PC-9 (cell line): ENCODE measurements at regions of chr1 and their contacts with region 1.

Region 1: GRCh38 chr1:67832737-67833601 is at the start of gene GNG12:
- DNase-seq: peak; percentile 67 to 85
- H3K4me3 ChIP-seq: peak within 1 kb of the TSS; percentile 92
- H3K27ac ChIP-seq: peak within 1 kb of the TSS; percentile 82
- H3K4me1 ChIP-seq: peaks cover 20% of the 10 kb centered on the region
- H3K27me3 ChIP-seq: no peaks in the 10 kb centered on the region
- CTCF ChIP-seq: no peak
- total RNA-seq, gene GNG12: 69.9 and 102 TPM in 2 replicates

Region 2: DNA sequence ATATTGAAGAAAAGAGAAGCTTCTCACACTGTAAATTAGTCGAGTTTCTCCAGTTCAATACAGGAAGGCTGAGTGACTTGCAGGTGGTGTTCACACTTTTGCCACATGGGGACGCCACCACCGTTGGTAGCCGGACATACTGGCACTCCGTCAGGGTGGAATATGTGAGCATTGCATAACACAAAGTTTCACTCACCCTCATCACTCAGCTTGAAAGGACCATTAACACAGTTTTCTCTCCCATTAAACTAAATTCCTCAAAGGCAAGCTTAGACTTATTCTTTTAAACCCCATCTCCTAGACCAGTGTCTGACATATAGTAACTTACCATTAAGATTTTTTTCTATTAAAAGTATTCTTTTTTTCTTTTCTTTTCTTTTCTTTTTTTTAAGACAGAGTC is 297.5 kb before region 1 on chr1:
- CTCF ChIA-PET with region 1: no interaction called
- POLR2A ChIA-PET with region 1: no interaction called
- intact Hi-C with region 1: loop called (anchors 5 kb)
- DNase-seq: peak; percentile 69 to 88
- H3K4me3 ChIP-seq: no peak overlapping the region
- H3K27ac ChIP-seq: no peak overlapping the region
- H3K4me1 ChIP-seq: peaks cover 12% of the 10 kb centered on the region; the same call in 1 of the 2 replicates
- H3K27me3 ChIP-seq: no peaks in the 10 kb centered on the region
- CTCF ChIP-seq: peak; percentile 97

Region 3: DNA sequence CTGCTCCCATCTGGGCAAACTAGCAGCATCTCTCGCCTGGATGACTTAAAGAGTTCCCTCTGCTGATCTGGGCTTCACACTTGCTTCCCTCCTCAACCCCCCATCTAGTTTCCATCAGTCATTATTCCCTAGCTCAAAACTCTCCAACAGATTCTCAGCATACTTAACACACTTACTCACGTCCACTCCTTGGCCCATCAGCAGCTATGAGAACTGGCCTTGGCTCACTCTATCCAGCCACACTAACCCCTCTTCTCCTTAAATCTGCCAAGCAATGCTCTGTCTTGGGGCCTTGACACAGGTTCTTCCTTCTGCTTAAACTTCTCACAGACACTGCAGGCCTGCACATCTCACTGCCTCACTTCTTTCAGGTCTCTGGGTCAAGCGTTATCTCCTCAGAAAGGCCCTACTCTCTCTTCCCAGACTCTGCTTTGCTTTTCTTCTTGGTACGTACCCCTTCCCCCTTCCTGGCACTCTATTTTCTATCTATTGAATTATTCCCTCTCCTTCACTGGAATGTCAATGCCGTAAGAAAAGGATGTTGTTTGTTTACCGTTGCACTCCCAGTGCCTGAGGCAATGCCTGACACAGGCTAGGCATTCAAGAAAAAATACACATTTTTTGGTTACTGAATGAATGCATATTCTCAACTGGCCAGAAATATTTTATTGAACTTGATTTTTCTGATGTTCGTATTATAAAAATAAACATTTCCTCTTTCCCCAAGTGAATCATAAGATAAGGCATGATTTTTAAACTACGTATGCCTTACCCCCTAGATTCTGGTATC is 41.1 kb before region 1 on chr1:
- CTCF ChIA-PET with region 1: no interaction called
- POLR2A ChIA-PET with region 1: interaction called, 4 read pairs
- intact Hi-C with region 1: loop called (anchors 1 kb)
- DNase-seq: peak; percentile 60 to 89
- H3K4me3 ChIP-seq: no peak overlapping the region; the same call in 1 of the 2 replicates
- H3K27ac ChIP-seq: peak overlapping the region; percentile 84
- H3K4me1 ChIP-seq: peaks cover 45% of the 10 kb centered on the region
- H3K27me3 ChIP-seq: no peaks in the 10 kb centered on the region
- CTCF ChIP-seq: no peak

Region 4: DNA sequence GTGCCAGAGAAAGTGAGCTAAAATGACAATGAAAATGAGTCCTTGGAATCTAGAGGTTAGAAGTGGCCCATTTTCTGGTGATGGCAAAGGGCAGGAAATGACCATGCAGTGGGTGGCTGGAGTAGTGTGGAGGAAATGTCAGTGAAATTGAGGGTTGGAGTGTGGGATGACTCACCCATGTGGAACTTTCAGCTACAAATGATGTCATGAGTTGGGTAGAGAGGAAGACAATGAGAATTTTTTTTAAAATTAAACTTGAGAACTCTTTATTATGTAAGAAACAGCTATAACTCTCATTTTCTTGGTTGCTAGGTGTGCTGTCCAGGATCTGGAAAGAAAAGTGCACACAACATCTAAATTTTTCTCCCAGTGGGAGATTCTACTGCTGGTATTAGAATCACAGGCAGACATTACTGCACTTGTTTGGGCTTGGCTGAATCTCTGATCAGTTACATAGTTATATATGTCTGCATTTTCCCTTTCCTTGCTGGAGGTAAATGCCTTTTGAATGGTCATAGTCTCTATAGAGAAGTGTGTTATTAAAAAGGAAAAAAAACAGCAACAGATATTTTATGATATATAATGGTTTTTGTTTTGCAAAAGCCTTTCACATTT is 57.1 kb after region 1 on chr1:
- CTCF ChIA-PET with region 1: no interaction called
- POLR2A ChIA-PET with region 1: no interaction called
- intact Hi-C with region 1: loop called (anchors 2 kb)
- DNase-seq: peak; percentile 70 to 76
- H3K4me3 ChIP-seq: no peak overlapping the region
- H3K27ac ChIP-seq: 0 out of 2 replicates have a peak overlapping the region, but pooled peaks have one; percentile 3
- H3K4me1 ChIP-seq: peaks cover 15% of the 10 kb centered on the region
- H3K27me3 ChIP-seq: no peaks in the 10 kb centered on the region
- CTCF ChIP-seq: no peak